ENCODE measurements at regions of chr11 and their contacts with region 1.

Region 1: GRCh38 chr11:64152841-64153691 is 12.8 kb downstream of the MACROD1 start:
- DNase-seq: peak in 3 of 4 donors; percentile 67 to 96 (median 69)
- ATAC-seq: peak; percentile 95
- H3K4me3 ChIP-seq: no peak overlapping the region
- H3K27ac ChIP-seq: no peak overlapping the region
- H3K4me1 ChIP-seq: peaks cover 0 to 5% of the 10 kb centered on the region in 2 donors
- H3K27me3 ChIP-seq: no peaks in the 10 kb centered on the region
- CTCF ChIP-seq: peak; percentile 100

Region 2: DNA sequence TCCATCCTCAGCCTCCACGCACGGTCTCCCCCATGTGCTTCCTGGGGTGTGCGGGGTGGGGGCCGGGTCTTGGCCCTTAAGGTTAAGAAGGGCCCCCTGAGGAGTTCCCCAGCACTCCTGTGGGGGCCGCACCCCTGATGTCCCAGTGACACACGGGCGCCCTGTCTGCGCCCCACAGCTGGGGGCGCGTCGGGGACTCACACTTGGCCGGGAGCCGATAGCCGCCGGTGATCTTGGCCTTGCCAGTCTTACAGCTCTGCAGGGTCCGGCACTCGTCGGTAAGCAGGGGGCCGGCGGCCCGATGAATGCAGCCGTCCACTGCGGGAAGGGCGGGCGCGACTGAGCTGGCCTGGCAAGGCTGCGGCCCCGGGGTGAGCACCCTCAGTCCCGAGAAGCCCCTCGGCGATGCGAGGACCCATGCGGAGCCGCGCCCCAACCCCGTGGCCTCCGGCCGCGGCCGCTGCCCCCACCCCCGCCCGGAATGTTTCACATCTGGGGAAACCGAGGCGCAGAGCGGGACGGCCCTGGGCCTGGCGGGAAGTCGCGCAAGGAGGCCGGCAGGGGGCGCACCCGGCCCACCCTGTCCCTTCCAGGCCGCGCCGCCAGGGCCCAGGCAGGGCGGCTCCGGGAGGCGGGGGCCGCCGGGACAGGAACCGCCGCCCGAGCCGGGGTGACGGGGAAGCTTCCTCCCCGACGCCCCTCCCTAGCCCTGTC is 152.9 kb before region 1 on chr11:
- intact Hi-C with region 1: loop called (anchors 2 to 5 kb)
- DNase-seq: peak in 3 of 4 donors; percentile 56 to 92 (median 78)
- ATAC-seq: peak; percentile 90
- H3K4me3 ChIP-seq: peak overlapping the region; percentile 26 to 29
- H3K27ac ChIP-seq: no peak overlapping the region
- H3K4me1 ChIP-seq: peaks cover 22 to 43% of the 10 kb centered on the region in 2 donors
- H3K27me3 ChIP-seq: peaks cover 0 to 48% of the 10 kb centered on the region in 2 donors
- CTCF ChIP-seq: peak; percentile 71 to 82

Measured in left lung (tissue), 14 donors.